Naive thymus-derived CD4-positive, alpha-beta T cell (primary cell): ENCODE measurements at regions of chr1 and their contacts with region 1.

Region 1: GRCh38 chr1:18649693-18650370 is 19.2 kb downstream of the PAX7 start:
- DNase-seq: no peak
- ATAC-seq: no peak
- H3K4me3 ChIP-seq: no peak overlapping the region
- H3K4me3 Mint-ChIP-seq: no peak overlapping the region
- H3K27ac ChIP-seq: no peak overlapping the region
- H3K27ac Mint-ChIP-seq: no peak overlapping the region
- H3K4me1 ChIP-seq: peaks cover 0 to 60% of the 10 kb centered on the region in 2 donors
- H3K4me1 Mint-ChIP-seq: peaks cover 20 to 78% (median 72%) of the 10 kb centered on the region in 7 donors
- H3K27me3 ChIP-seq: peaks cover 0 to 22% of the 10 kb centered on the region in 2 donors
- H3K27me3 Mint-ChIP-seq: peaks cover 37 to 88% (median 62%) of the 10 kb centered on the region in 5 donors

Region 2: GRCh38 chr1:18557621-18558465 is 92.0 kb before region 1 on chr1:
- CTCF ChIA-PET with region 1: no interaction called
- POLR2A ChIA-PET with region 1: no interaction called
- intact Hi-C with region 1: no loop called
- DNase-seq: peak in 2 of 9 donors; percentile 6 to 14
- ATAC-seq: peak; percentile 37
- H3K4me3 ChIP-seq: no peak overlapping the region
- H3K4me3 Mint-ChIP-seq: peak overlapping the region; percentile 21 to 73 (median 52)
- H3K27ac ChIP-seq: no peak overlapping the region
- H3K27ac Mint-ChIP-seq: peak overlapping the region in 2 of 9 donors; percentile 25 to 47
- H3K4me1 ChIP-seq: no peaks in the 10 kb centered on the region
- H3K4me1 Mint-ChIP-seq: peaks cover 8 to 19% (median 12%) of the 10 kb centered on the region in 7 donors
- H3K27me3 ChIP-seq: no peaks in the 10 kb centered on the region
- H3K27me3 Mint-ChIP-seq: peaks cover 31 to 77% (median 62%) of the 10 kb centered on the region in 5 donors

Region 3: GRCh38 chr1:18666438-18666861 is 16.6 kb after region 1 on chr1:
- CTCF ChIA-PET with region 1: interaction called, 5 read pairs
- POLR2A ChIA-PET with region 1: interaction called, 26 read pairs
- intact Hi-C with region 1: loop called in 1 of 2 experiments (anchors 2 kb)
- DNase-seq: no peak
- ATAC-seq: no peak
- H3K4me3 ChIP-seq: no peak overlapping the region
- H3K4me3 Mint-ChIP-seq: peak overlapping the region in 8 of 10 donors; percentile 16 to 68 (median 55)
- H3K27ac ChIP-seq: no peak overlapping the region
- H3K27ac Mint-ChIP-seq: peak overlapping the region in 7 of 9 donors; percentile 16 to 63 (median 44)
- H3K4me1 ChIP-seq: peaks cover 0 to 26% of the 10 kb centered on the region in 2 donors
- H3K4me1 Mint-ChIP-seq: peaks cover 5 to 42% (median 28%) of the 10 kb centered on the region in 7 donors
- H3K27me3 ChIP-seq: no peaks in the 10 kb centered on the region
- H3K27me3 Mint-ChIP-seq: peaks cover 0 to 13% (median 0%) of the 10 kb centered on the region in 5 donors

Region 4: GRCh38 chr1:18673975-18674374 is 24.1 kb after region 1 on chr1:
- CTCF ChIA-PET with region 1: no interaction called
- POLR2A ChIA-PET with region 1: no interaction called
- intact Hi-C with region 1: loop called in 1 of 2 experiments (anchors 2 kb)
- DNase-seq: peak in 1 of 9 donors; percentile 16
- ATAC-seq: no peak
- H3K4me3 ChIP-seq: no peak overlapping the region
- H3K4me3 Mint-ChIP-seq: no peak overlapping the region
- H3K27ac ChIP-seq: no peak overlapping the region
- H3K27ac Mint-ChIP-seq: no peak overlapping the region
- H3K4me1 ChIP-seq: peaks cover 0 to 3% of the 10 kb centered on the region in 2 donors
- H3K4me1 Mint-ChIP-seq: peaks cover 0 to 25% (median 7%) of the 10 kb centered on the region in 7 donors
- H3K27me3 ChIP-seq: no peaks in the 10 kb centered on the region
- H3K27me3 Mint-ChIP-seq: peaks cover 15 to 33% (median 19%) of the 10 kb centered on the region in 5 donors

Region 5: GRCh38 chr1:18681423-18681835 is 31.6 kb after region 1 on chr1:
- CTCF ChIA-PET with region 1: no interaction called
- POLR2A ChIA-PET with region 1: no interaction called
- intact Hi-C with region 1: loop called in 1 of 2 experiments (anchors 1 kb)
- DNase-seq: peak in 6 of 9 donors; percentile 10 to 55 (median 38)
- ATAC-seq: no peak
- H3K4me3 ChIP-seq: no peak overlapping the region
- H3K4me3 Mint-ChIP-seq: no peak overlapping the region
- H3K27ac ChIP-seq: no peak overlapping the region
- H3K27ac Mint-ChIP-seq: no peak overlapping the region
- H3K4me1 ChIP-seq: peaks cover 0 to 3% of the 10 kb centered on the region in 2 donors
- H3K4me1 Mint-ChIP-seq: peaks cover 0 to 10% (median 2%) of the 10 kb centered on the region in 7 donors
- H3K27me3 ChIP-seq: no peaks in the 10 kb centered on the region
- H3K27me3 Mint-ChIP-seq: peaks cover 2 to 27% (median 14%) of the 10 kb centered on the region in 5 donors

Region 6: GRCh38 chr1:18705811-18706210 is 56.0 kb after region 1 on chr1:
- CTCF ChIA-PET with region 1: no interaction called
- POLR2A ChIA-PET with region 1: no interaction called
- intact Hi-C with region 1: no loop called
- DNase-seq: no peak
- ATAC-seq: no peak
- H3K4me3 ChIP-seq: no peak overlapping the region
- H3K4me3 Mint-ChIP-seq: no peak overlapping the region
- H3K27ac ChIP-seq: no peak overlapping the region
- H3K27ac Mint-ChIP-seq: no peak overlapping the region
- H3K4me1 ChIP-seq: no peaks in the 10 kb centered on the region
- H3K4me1 Mint-ChIP-seq: peaks cover 0 to 3% (median 0%) of the 10 kb centered on the region in 7 donors
- H3K27me3 ChIP-seq: no peaks in the 10 kb centered on the region
- H3K27me3 Mint-ChIP-seq: peaks cover 19 to 46% (median 25%) of the 10 kb centered on the region in 5 donors